Calu3 (cell line): ENCODE measurements at regions of chr1 and their contacts with region 1.

Region 1: DNA sequence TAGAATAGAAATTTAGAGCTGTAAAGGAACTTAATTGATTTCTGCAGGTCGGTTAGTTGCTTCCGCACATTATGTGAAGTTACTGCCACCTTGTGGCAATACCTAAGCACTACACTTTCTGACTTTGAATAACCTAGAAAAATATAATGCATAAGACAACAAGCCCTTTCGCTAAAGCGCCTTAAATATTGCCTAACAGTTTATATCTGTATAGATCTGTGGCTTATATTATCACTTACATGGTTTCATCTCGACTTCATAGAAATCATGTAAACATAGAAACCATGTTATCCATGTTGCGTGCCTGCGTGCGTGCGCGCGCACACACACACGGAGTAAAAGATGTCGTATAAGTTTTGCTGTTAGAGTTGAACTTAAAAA is 10.9 kb upstream of the IFI16 start:
- DNase-seq: peak; percentile 51
- H3K4me3 Mint-ChIP-seq: peak overlapping the region; percentile 63
- H3K27ac Mint-ChIP-seq: peak overlapping the region; percentile 38
- H3K4me1 Mint-ChIP-seq: peaks cover 29% of the 10 kb centered on the region
- H3K27me3 Mint-ChIP-seq: no peaks in the 10 kb centered on the region
- CTCF ChIP-seq: peak; percentile 83

Region 2: GRCh38 chr1:158506369-158506987 is 492.3 kb before region 1 on chr1:
- CTCF ChIA-PET with region 1: no interaction called
- intact Hi-C with region 1: loop called (anchors 2 kb)
- DNase-seq: peak; percentile 66
- H3K4me3 Mint-ChIP-seq: no peak overlapping the region
- H3K27ac Mint-ChIP-seq: no peak overlapping the region
- H3K4me1 Mint-ChIP-seq: no peaks in the 10 kb centered on the region
- H3K27me3 Mint-ChIP-seq: peaks cover 29% of the 10 kb centered on the region
- CTCF ChIP-seq: peak; percentile 50

Region 3: DNA sequence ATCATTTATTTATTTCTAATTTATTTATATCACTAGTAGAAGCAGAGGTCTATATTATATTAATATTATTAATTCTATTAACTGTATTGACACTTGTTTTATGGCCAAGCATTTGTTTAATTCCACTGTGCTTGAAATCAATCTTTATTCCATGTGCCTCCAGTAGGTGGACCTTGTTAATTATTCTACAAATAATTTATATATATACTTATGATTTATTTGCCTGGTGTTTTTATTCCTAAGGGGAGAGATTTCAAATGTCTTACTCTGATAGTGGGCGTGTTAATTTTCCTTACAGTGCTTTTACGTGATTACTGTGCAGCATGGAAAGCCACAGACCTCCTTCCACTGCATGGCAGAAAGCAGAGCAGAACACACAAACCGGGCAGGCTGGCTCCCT is 200.2 kb before region 1 on chr1:
- CTCF ChIA-PET with region 1: no interaction called
- intact Hi-C with region 1: loop called (anchors 5 kb)
- DNase-seq: no peak
- H3K4me3 Mint-ChIP-seq: no peak overlapping the region
- H3K27ac Mint-ChIP-seq: no peak overlapping the region
- H3K4me1 Mint-ChIP-seq: no peaks in the 10 kb centered on the region
- H3K27me3 Mint-ChIP-seq: peaks cover 73% of the 10 kb centered on the region
- CTCF ChIP-seq: peak; percentile 44

Region 4: DNA sequence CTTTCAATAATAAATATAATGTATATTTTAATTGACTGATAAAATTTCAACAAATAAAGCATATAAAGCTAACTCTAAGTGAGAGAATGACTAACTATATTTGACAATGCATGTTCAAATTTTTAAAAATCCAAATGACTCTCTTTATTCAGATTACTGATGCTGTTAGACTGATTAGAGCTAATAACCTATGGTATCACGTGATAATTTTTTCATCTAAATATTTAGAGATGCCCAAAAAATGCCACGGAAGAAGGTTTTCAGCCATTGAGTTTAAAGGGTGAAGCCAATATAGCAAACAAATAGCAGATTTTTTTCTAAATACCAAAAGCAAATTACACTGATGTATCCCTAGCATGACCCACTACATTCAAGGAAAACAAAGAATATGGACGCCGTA is 372.1 kb after region 1 on chr1:
- CTCF ChIA-PET with region 1: no interaction called
- intact Hi-C with region 1: no loop called
- DNase-seq: no peak
- H3K4me3 Mint-ChIP-seq: no peak overlapping the region
- H3K27ac Mint-ChIP-seq: no peak overlapping the region
- H3K4me1 Mint-ChIP-seq: no peaks in the 10 kb centered on the region
- H3K27me3 Mint-ChIP-seq: no peaks in the 10 kb centered on the region
- CTCF ChIP-seq: no peak